ENCODE measurements at regions of chr11 and their contacts with region 1.

Region 1: DNA sequence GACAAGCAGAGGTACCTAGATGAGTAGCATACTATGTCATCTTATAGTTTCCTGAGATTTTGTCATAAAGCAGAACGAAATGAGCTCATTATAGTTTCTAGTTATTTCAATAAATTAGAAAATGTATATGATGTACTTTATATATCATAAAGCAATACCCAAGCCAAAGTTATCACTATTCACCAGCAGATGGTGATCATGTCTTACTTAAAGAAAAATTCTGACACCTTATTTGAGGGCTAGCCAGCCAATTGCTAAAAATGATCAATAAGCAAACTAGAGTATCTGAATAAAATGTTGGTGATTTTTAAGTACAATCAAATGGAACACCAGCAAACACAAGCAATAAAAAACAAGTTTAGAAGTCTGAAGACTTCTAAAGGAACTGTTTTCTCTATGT is 44.1 kb downstream of the RSF1 start:
- DNase-seq: peak; percentile 20
- ATAC-seq: peak; percentile 29; the same call in 1 of the 2 replicates
- H3K4me3 ChIP-seq: no peak overlapping the region
- H3K27ac ChIP-seq: no peak overlapping the region
- H3K4me1 ChIP-seq: 0 out of 2 replicates have a peak, but pooled peaks cover 1% of the 10 kb centered on the region
- H3K27me3 ChIP-seq: no peaks in the 10 kb centered on the region
- CTCF ChIP-seq: peak; percentile 43
- POLR2A ChIP-seq: no peak
- RAD21 ChIP-seq: peak; percentile 59

Region 2: DNA sequence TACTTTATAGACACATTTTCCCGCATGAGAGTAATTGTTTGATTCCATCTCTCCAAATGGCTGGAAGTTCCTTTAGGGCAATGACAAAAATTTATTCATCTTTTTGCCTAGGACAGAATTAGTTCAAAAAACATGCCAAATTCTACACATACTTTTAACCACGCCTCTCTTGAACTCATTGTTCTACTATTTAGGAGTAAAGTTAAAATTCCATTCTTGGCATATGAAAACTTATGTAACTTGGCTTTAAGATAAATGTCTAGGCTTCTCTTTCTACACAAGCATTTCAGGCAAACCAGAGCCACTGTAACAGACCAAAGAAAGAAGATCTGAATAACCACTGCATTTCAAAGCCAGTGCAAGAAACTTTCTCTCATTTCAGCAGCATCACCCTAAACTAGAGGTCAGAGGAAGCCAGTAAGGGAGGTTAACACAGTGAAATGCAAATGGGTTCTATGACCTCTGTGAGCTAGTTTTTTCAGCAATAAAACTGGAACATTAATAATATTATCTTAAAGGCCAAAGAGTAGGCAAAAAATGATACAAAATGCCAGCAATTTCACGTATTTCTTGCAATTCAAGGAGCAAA is 29.0 kb before region 1 on chr11:
- CTCF ChIA-PET with region 1: interaction called, 3 read pairs
- POLR2A ChIA-PET with region 1: no interaction called
- dilution Hi-C with region 1: no loop called
- in situ Hi-C with region 1: no loop called
- intact Hi-C with region 1: loop called (anchors 1 kb)
- DNase-seq: peak; percentile 36
- ATAC-seq: peak; percentile 46
- H3K4me3 ChIP-seq: no peak overlapping the region
- H3K27ac ChIP-seq: no peak overlapping the region
- H3K4me1 ChIP-seq: peaks cover 8% of the 10 kb centered on the region
- H3K27me3 ChIP-seq: no peaks in the 10 kb centered on the region
- CTCF ChIP-seq: no peak
- POLR2A ChIP-seq: no peak
- RAD21 ChIP-seq: no peak

Region 3: GRCh38 chr11:77820563-77821348 is 44.3 kb after region 1 on chr11 and contains the starts of genes AAMDC and RSF1:
- CTCF ChIA-PET with region 1: no interaction called
- POLR2A ChIA-PET with region 1: no interaction called
- dilution Hi-C with region 1: no loop called
- in situ Hi-C with region 1: no loop called
- intact Hi-C with region 1: loop called (anchors 5 kb)
- DNase-seq: peak; percentile 99
- ATAC-seq: peak; percentile 89
- H3K4me3 ChIP-seq: peak within 1 kb of the TSS; percentile 94
- H3K27ac ChIP-seq: peak within 1 kb of the TSS; percentile 89
- H3K4me1 ChIP-seq: peaks cover 3% of the 10 kb centered on the region
- H3K27me3 ChIP-seq: no peaks in the 10 kb centered on the region
- CTCF ChIP-seq: peak; percentile 88
- POLR2A ChIP-seq: peak; percentile 72
- RAD21 ChIP-seq: peak; percentile 71
- total RNA-seq, gene AAMDC: 15.8 and 49.7 TPM in 2 replicates
- total RNA-seq, gene RSF1: 18.5 and 26.7 TPM in 2 replicates

Region 4: DNA sequence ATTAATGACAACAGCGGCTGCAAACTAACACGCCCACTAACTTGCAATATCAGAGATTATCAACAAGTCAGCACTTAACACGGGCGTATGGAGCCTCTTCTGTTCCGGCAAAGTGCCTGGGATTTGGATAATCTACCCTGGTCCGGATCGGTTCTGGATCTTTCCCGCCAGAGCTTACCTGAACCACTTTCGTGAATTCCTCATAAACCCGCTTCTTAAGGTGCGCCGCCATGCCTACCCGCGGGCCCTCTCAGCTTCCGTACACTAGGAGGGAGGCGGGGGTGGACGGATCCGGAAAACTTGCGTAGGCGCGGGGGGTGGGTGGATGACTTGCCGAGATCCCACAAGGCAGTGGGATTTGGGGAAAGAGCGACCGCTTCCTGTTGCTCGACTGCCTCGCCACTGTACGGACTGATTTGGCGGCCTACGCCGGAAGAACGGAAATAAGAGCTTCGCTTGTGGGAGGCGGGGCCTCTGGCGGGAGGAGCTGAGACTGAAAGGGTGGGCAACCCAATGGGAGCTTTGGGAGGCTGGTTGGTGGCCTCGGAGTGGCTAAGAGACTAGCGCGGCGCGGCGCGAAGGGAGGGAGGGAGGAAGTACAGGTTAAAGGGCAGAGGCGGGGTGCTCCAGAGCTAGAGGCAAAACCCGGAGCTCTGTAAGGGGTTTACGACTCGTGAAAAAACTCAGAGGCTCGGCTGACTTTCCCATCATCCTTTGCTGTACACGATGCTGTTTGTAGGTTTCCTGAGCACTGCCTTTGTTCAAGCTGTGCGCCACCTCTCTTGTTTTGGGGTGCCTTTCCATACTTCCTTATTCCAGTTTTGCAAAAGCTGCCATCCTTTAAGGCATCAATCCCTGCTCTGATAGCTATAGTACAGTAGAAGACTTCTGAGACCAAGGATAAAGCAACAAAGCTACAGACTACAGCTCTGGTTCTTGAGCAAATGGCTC is 218.2 kb after region 1 on chr11 and contains the start of gene INTS4:
- CTCF ChIA-PET with region 1: interaction called, 3 read pairs
- POLR2A ChIA-PET with region 1: no interaction called
- dilution Hi-C with region 1: no loop called
- in situ Hi-C with region 1: loop called (anchors 10 kb)
- intact Hi-C with region 1: no loop called
- DNase-seq: peak; percentile 100
- ATAC-seq: peak; percentile 100
- H3K4me3 ChIP-seq: peak within 1 kb of the TSS; percentile 66
- H3K27ac ChIP-seq: peak within 1 kb of the TSS; percentile 74
- H3K4me1 ChIP-seq: peaks cover 2% of the 10 kb centered on the region; the same call in 1 of the 2 replicates
- H3K27me3 ChIP-seq: no peaks in the 10 kb centered on the region
- CTCF ChIP-seq: no peak
- POLR2A ChIP-seq: peak; percentile 66
- RAD21 ChIP-seq: no peak; the same call in 1 of the 2 replicates
- total RNA-seq, gene INTS4: 44.4 and 52.5 TPM in 2 replicates

Region 5: GRCh38 chr11:78000193-78000592 is 223.7 kb after region 1 on chr11:
- CTCF ChIA-PET with region 1: interaction called, 3 read pairs
- POLR2A ChIA-PET with region 1: no interaction called
- dilution Hi-C with region 1: no loop called
- in situ Hi-C with region 1: loop called (anchors 10 kb)
- intact Hi-C with region 1: loop called (anchors 1 kb)
- DNase-seq: peak; percentile 77
- ATAC-seq: peak; percentile 94
- H3K4me3 ChIP-seq: no peak overlapping the region
- H3K27ac ChIP-seq: no peak overlapping the region
- H3K4me1 ChIP-seq: peaks cover 2% of the 10 kb centered on the region; the same call in 1 of the 2 replicates
- H3K27me3 ChIP-seq: peaks cover 5% of the 10 kb centered on the region
- CTCF ChIP-seq: peak; percentile 74
- POLR2A ChIP-seq: no peak
- RAD21 ChIP-seq: peak; percentile 71

Region 6: GRCh38 chr11:78045851-78046485 is 269.5 kb after region 1 on chr11:
- CTCF ChIA-PET with region 1: no interaction called
- POLR2A ChIA-PET with region 1: no interaction called
- dilution Hi-C with region 1: no loop called
- in situ Hi-C with region 1: no loop called
- intact Hi-C with region 1: loop called (anchors 1 kb)
- DNase-seq: peak; percentile 59
- ATAC-seq: peak; percentile 93
- H3K4me3 ChIP-seq: peak overlapping the region; percentile 41
- H3K27ac ChIP-seq: peak overlapping the region; percentile 29
- H3K4me1 ChIP-seq: peaks cover 23% of the 10 kb centered on the region
- H3K27me3 ChIP-seq: no peaks in the 10 kb centered on the region
- CTCF ChIP-seq: peak; percentile 95
- POLR2A ChIP-seq: no peak
- RAD21 ChIP-seq: peak; percentile 92